Ascending aorta (tissue), 2 donors: ENCODE measurements at regions of chr1 and their contacts with region 1.

Region 1: GRCh38 chr1:202625416-202626360 is 84.6 kb downstream of the SYT2 start:
- DNase-seq: peak in 1 of 2 donors; percentile 81
- H3K4me3 ChIP-seq: no peak overlapping the region
- H3K27ac ChIP-seq: no peak overlapping the region
- H3K4me1 ChIP-seq: peaks cover 11 to 21% of the 10 kb centered on the region in 2 donors
- H3K27me3 ChIP-seq: no peaks in the 10 kb centered on the region
- CTCF ChIP-seq: peak; percentile 75 to 80 (median 78)

Region 2: DNA sequence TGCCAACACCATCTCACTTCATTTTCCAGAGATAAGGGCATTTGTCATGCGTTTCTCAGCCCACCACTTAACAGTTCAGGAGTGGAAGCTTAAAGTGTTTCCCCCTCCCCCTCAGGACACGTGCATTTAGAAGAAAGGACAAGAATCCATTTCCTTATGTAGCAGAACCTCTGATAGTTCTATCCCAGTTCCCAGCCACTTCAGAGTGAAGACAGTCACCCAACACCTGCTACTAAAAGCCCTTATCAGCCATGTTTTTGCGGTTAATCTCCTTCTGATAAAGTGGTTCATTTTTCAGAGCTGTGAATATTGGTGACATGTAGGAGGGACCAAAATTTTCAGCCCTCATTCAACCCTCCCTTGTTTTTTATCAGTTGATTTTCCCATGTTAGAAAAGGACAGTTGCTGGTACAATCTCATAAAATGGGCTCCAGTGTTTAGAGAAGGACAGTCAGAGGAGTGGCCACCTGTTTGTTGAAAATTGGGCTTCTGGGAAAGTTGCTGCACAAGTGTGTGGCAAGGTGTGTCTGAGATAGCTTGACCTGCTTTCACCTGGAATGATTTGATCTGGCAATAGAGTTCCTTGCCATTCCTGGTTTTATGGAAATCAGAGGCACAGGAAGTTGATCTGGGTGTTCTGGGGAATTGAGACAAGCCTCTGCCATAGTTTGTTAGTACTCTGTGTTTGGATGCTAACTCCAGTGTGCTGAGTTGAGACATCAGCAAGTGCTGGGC is 163.2 kb before region 1 on chr1:
- intact Hi-C with region 1: loop called (anchors 5 kb)
- DNase-seq: no peak
- H3K4me3 ChIP-seq: no peak overlapping the region
- H3K27ac ChIP-seq: no peak overlapping the region
- H3K4me1 ChIP-seq: peaks cover 0 to 8% of the 10 kb centered on the region in 2 donors
- H3K27me3 ChIP-seq: no peaks in the 10 kb centered on the region
- CTCF ChIP-seq: no peak